B cell (primary cell): ENCODE measurements at regions of chr1 and their contacts with region 1.

Region 1: DNA sequence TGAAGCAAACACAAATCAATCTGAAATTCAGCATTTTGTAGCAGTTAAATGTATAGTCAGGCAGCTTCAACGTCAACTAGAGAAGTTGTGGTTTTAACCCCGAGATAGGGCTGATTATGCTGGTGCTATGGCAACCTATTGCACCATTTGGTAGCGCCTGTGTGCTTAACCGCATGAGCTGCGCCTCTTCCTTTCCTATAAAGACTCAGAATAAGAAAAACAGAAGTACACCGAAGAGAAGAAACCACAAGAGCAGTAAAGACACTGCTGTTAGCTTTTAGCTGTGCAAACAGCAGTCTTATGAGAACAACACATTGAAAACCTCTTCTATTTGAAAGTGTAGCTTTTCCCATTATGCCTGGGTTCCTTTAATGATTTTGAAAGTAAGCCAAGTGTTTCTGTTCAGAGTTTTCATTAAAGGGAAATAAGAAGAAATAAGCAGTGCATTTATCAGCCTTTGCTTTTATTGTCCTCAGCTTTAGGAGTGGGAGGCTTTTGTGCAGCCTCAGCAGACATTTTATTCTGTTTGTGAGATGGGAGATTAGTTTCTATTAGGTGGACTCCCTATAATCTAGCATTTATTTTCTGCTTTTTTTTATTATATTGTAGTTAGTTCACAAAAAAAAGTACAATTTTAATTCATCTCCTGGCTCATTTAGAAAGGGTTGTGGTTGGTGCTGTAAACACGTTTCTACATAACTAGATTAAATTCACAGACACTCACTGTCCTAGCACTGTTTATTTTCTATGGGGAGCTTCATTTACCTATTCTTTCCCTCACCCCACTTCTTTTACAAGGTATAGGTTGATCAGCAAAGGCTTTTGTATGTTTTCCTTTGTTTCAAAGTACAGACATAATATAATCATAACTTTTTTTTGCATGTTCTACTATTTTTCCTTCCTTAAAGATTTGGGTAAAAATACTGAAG is 43.3 kb downstream of the PTPRC start:
- DNase-seq: peak; percentile 94
- ATAC-seq: peak; percentile 83
- H3K4me3 ChIP-seq: peak overlapping the region; percentile 9 to 66 (median 35)
- H3K4me3 Mint-ChIP-seq: peak overlapping the region; percentile 57
- H3K27ac ChIP-seq: peak overlapping the region; percentile 73 to 98
- H3K27ac Mint-ChIP-seq: peak overlapping the region; percentile 82
- H3K4me1 ChIP-seq: peaks cover 76 to 92% of the 10 kb centered on the region in 2 donors
- H3K4me1 Mint-ChIP-seq: peaks cover 86% of the 10 kb centered on the region
- H3K27me3 ChIP-seq: no peaks in the 10 kb centered on the region
- H3K27me3 Mint-ChIP-seq: no peaks in the 10 kb centered on the region
- CTCF ChIP-seq: no peak

Region 2: DNA sequence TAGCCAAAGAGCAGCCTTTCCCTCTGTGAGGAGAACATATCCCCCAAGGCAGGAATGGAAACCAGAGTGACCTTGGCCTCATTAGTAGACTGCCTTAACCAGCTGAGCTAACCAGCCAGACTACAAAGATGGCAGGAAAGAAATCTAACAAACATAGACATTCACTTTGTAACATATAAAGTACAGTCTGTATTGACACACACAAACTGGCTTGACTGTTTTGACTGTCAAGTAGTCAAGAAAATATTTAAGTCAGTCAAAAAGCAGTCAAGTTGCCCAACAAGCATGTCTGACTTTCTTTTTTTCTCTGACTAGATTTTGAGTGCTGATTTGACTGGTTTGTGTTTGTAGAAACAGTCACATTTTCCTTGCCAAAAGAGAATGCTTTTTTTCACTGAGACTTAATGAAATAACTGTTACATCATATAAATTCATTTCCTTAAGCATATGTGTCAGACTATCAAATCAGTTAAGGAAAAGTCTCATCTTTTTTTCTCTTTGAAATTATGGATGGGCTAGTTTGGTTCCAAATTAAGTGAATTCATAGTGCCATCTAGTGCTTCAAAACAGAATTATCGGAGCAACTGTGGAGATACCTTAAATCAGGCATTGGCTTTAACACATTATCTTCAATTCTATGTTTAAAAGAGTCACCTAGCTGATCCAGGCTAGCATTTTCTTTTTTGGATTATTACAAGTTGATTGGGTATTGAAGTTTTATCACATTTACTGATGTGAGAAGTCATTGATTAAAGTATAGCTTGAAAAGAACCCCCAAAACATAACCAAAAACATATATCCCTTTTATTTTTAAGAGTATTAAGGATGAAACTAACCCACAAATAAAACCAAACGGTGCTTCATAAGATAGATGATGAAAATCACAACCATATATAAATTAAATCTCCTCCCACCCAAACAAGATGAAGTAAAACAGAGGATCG is 216.6 kb before region 1 on chr1:
- CTCF ChIA-PET with region 1: interaction called, 10 read pairs
- POLR2A ChIA-PET with region 1: no interaction called
- intact Hi-C with region 1: no loop called
- DNase-seq: peak; percentile 58
- ATAC-seq: no peak
- H3K4me3 ChIP-seq: no peak overlapping the region
- H3K4me3 Mint-ChIP-seq: no peak overlapping the region
- H3K27ac ChIP-seq: no peak overlapping the region
- H3K27ac Mint-ChIP-seq: no peak overlapping the region
- H3K4me1 ChIP-seq: no peaks in the 10 kb centered on the region
- H3K4me1 Mint-ChIP-seq: no peaks in the 10 kb centered on the region
- H3K27me3 ChIP-seq: no peaks in the 10 kb centered on the region
- H3K27me3 Mint-ChIP-seq: no peaks in the 10 kb centered on the region
- CTCF ChIP-seq: peak; percentile 78

Region 3: GRCh38 chr1:198534548-198535418 is 147.3 kb before region 1 on chr1:
- CTCF ChIA-PET with region 1: no interaction called
- POLR2A ChIA-PET with region 1: no interaction called
- intact Hi-C with region 1: loop called (anchors 5 kb)
- DNase-seq: peak; percentile 28
- ATAC-seq: peak; percentile 56
- H3K4me3 ChIP-seq: peak overlapping the region in 1 of 5 experiments; percentile 14
- H3K4me3 Mint-ChIP-seq: peak overlapping the region; percentile 46
- H3K27ac ChIP-seq: peak overlapping the region; percentile 54 to 70
- H3K27ac Mint-ChIP-seq: peak overlapping the region; percentile 67
- H3K4me1 ChIP-seq: peaks cover 46 to 78% of the 10 kb centered on the region in 2 donors
- H3K4me1 Mint-ChIP-seq: peaks cover 83% of the 10 kb centered on the region
- H3K27me3 ChIP-seq: no peaks in the 10 kb centered on the region
- H3K27me3 Mint-ChIP-seq: no peaks in the 10 kb centered on the region
- CTCF ChIP-seq: no peak

Region 4: DNA sequence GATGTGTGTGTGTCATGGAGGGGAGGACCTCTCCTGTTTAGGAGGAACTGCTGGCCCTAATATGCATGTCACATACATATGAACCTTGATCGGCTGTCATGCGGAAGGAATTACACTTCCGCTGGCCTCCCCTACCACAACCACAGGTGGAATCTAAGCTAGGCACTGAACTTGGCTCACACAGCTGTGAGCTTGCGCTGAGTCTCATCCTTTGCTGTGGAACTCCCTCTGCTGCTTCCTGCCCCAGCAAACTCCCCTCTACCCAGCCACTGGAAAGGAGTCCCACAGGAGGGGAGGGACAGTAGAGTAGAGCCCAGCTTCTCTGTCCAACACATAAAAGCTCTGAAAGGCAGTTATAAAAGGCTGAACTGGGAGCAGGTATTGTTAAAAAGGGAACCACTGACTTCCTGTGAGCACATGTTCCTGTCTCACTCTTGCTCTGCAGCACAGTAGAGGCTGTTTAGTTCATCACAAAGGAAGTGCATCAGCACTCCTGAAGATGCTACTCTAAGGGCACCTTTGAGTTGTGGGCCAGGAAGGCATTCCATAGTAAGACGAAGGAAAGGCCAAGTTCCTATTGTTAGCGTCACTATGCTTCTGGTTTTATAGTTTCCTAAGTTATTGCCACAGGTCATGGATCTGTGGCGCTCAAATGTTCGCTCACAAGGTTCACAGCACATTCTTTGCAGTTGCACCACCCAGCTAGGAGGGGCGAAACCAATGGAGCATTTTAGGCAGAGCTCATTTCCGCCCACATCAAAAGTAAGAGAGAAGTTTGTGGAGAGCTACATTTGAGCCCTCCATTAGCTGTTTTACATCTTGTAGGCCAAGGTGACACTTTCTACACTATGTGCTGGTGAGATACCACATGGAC is 60.9 kb before region 1 on chr1:
- CTCF ChIA-PET with region 1: interaction called, 87 read pairs
- POLR2A ChIA-PET with region 1: interaction called, 60 read pairs
- intact Hi-C with region 1: loop called (anchors 1 kb)
- DNase-seq: peak; percentile 92
- ATAC-seq: peak; percentile 67
- H3K4me3 ChIP-seq: peak overlapping the region; percentile 27 to 70 (median 52)
- H3K4me3 Mint-ChIP-seq: peak overlapping the region; percentile 86
- H3K27ac ChIP-seq: peak overlapping the region; percentile 90 to 95
- H3K27ac Mint-ChIP-seq: peak overlapping the region; percentile 98
- H3K4me1 ChIP-seq: peaks cover 69 to 75% of the 10 kb centered on the region in 2 donors
- H3K4me1 Mint-ChIP-seq: peaks cover 80% of the 10 kb centered on the region
- H3K27me3 ChIP-seq: no peaks in the 10 kb centered on the region
- H3K27me3 Mint-ChIP-seq: no peaks in the 10 kb centered on the region
- CTCF ChIP-seq: no peak

Region 5: GRCh38 chr1:198651650-198652400 is 30.3 kb before region 1 on chr1:
- CTCF ChIA-PET with region 1: interaction called, 12 read pairs
- POLR2A ChIA-PET with region 1: interaction called, 6 read pairs
- intact Hi-C with region 1: no loop called
- DNase-seq: peak; percentile 69
- ATAC-seq: peak; percentile 76
- H3K4me3 ChIP-seq: peak overlapping the region in 2 of 5 experiments; percentile 11 to 13
- H3K4me3 Mint-ChIP-seq: peak overlapping the region; percentile 68
- H3K27ac ChIP-seq: peak overlapping the region in 1 of 2 donors; percentile 90
- H3K27ac Mint-ChIP-seq: peak overlapping the region; percentile 73
- H3K4me1 ChIP-seq: peaks cover 50 to 94% of the 10 kb centered on the region in 2 donors
- H3K4me1 Mint-ChIP-seq: peaks cover 69% of the 10 kb centered on the region
- H3K27me3 ChIP-seq: no peaks in the 10 kb centered on the region
- H3K27me3 Mint-ChIP-seq: no peaks in the 10 kb centered on the region
- CTCF ChIP-seq: no peak

Region 6: GRCh38 chr1:198669023-198669698 is 12.9 kb before region 1 on chr1:
- CTCF ChIA-PET with region 1: interaction called, 12 read pairs
- POLR2A ChIA-PET with region 1: interaction called, 9 read pairs
- intact Hi-C with region 1: loop called (anchors 1 kb)
- DNase-seq: no peak
- ATAC-seq: peak; percentile 56
- H3K4me3 ChIP-seq: no peak overlapping the region
- H3K4me3 Mint-ChIP-seq: peak overlapping the region; percentile 64
- H3K27ac ChIP-seq: peak overlapping the region; percentile 42 to 72
- H3K27ac Mint-ChIP-seq: peak overlapping the region; percentile 94
- H3K4me1 ChIP-seq: peaks cover 72 to 88% of the 10 kb centered on the region in 2 donors
- H3K4me1 Mint-ChIP-seq: peaks cover 83% of the 10 kb centered on the region
- H3K27me3 ChIP-seq: no peaks in the 10 kb centered on the region
- H3K27me3 Mint-ChIP-seq: no peaks in the 10 kb centered on the region
- CTCF ChIP-seq: no peak

Region 7: DNA sequence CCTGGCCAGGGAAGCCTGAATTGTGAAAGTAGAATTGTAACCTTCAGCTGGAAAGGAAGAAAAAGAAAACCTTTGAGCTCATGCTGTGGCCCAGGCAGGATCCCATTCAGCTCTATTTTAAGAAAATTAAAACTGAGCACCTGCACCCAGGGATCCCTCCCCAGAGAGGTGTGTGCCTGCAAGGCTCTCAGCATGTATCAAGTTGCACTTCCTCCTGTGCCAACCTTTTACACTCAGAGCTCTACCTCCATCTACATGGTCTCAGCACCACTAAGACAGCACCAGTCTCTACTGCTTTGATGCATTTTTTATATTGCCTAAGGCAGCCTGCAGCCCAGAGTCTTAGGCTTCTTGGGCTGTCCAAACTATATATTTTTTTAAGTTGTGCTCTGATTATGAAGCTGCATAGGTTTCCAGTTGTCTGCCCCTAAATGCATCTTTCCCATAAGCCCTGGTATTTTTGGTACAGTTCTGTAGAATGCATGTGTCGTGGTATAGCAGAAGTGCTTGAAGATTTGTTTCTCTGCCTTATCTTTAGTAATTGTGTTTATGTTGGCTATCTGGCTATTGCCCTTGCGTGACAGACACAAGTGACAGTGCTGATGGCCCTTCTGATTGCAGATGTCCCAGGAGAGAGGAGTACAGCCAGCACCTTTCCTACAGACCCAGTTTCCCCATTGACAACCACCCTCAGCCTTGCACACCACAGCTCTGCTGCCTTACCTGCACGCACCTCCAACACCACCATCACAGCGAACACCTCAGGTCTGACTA is 19.9 kb after region 1 on chr1:
- CTCF ChIA-PET with region 1: interaction called, 11 read pairs
- POLR2A ChIA-PET with region 1: interaction called, 4 read pairs
- intact Hi-C with region 1: no loop called
- DNase-seq: no peak
- ATAC-seq: peak; percentile 80
- H3K4me3 ChIP-seq: no peak overlapping the region
- H3K4me3 Mint-ChIP-seq: no peak overlapping the region
- H3K27ac ChIP-seq: peak overlapping the region in 1 of 2 donors; percentile 23
- H3K27ac Mint-ChIP-seq: peak overlapping the region; percentile 83
- H3K4me1 ChIP-seq: peaks cover 23 to 27% of the 10 kb centered on the region in 2 donors
- H3K4me1 Mint-ChIP-seq: peaks cover 40% of the 10 kb centered on the region
- H3K27me3 ChIP-seq: no peaks in the 10 kb centered on the region
- H3K27me3 Mint-ChIP-seq: no peaks in the 10 kb centered on the region
- CTCF ChIP-seq: no peak